ENCODE measurements at regions of chr2 and their contacts with region 1.

Region 1: GRCh38 chr2:43226558-43226954 is at the start of gene ZFP36L2:
- DNase-seq: peak; percentile 98
- total RNA-seq, gene ZFP36L2: 41.4 TPM

Region 2: DNA sequence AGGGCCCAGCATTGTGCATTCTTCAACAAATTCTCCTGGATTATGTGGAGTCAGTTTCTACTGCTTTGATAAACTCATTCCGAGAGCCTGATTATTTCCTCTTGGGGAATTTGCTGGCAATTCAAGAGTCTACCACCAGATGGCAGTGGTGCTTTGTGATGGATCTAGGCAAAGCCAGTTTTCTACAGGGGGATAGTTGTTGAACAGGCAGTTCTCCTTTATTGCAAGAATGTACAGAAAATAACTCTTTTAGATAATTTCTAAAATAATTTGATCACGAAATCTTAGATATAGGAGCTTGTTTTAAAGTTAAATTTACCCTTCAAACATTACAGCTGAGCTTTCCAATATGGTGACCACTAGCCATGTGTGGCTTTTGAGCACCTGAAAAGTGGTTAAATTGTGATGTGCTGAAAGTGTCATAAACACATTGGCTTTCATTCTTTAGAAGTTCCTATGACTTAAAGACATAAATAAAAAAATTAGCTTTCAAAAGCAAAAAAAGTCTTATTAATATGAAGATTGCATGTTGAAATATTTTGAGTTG is 367.5 kb before region 1 on chr2:
- intact Hi-C with region 1: loop called (anchors 2 kb)
- DNase-seq: peak; percentile 56

Region 3: GRCh38 chr2:42974721-42975717 is 251.5 kb before region 1 on chr2:
- intact Hi-C with region 1: loop called (anchors 2 kb)
- DNase-seq: peak; percentile 90

Region 4: GRCh38 chr2:43131024-43131889 is 95.3 kb before region 1 on chr2:
- intact Hi-C with region 1: loop called (anchors 2 kb)
- DNase-seq: peak; percentile 91

Region 5: DNA sequence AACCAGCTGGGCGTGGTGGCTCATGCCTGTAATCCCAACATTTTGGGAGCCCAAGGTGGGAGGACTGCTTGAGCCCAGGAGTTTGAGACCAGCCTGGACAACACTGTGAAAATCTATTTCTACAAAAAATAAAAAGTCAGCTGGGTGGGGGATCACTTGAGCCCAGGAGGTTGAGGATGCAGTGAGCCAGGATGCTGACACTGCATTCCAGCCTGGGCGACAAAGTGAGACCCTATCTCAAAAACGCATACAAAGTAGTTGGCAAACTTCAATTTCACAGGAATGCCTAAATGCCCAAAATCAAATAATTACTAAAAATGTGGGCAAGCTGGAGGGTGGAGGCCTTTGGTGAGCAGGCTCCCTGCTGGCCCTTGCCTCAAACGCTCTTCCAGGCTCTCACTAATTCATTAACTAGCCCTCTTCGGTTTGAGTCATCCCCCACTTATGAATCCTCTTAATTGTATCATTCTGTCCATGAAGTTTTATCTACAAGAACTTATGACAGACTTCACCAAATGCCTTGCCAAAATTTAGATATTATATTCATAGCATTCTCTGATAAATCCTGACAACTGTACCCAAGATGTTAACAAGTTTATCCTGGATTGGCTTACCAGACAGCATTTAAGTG is 68.5 kb after region 1 on chr2:
- intact Hi-C with region 1: loop called (anchors 5 kb)
- DNase-seq: no peak

Region 6: GRCh38 chr2:43305517-43305916 is 79.0 kb after region 1 on chr2:
- intact Hi-C with region 1: no loop called
- DNase-seq: no peak

Region 7: GRCh38 chr2:43484323-43484930 is 257.9 kb after region 1 on chr2:
- intact Hi-C with region 1: loop called (anchors 2 kb)
- DNase-seq: no peak